K562 (cell line): ENCODE measurements at regions of chr10 and their contacts with region 1.

Region 1: DNA sequence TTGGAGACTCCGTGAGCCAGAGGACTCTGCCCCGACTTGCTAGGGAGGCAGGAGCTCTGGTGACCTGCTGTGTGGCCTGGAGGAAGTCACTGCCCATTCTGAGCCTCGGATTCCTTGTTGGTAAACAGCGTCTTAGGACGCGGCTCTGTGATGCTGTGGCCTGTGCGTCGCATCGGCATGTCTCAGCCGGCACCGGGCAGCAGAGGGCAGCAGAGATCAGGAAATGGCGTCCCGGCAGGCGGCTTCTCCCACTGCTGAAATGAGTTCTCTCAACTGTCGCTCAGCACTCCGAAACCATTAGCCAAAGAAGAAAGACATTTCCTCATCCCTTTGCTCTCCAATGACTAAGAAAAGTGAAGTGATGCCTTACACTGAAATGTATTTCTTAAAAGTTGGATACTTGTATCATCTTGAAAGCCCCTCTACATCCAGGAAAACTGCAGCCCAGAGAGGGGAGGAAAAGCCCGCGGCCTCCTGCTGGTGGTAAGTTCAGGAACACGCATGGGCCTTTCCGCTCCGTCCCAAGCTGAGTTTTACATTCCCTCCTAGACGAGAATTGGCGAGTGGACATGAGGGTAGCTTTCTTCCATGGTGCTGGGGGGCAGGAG is 91.7 kb downstream of the WDR11 start:
- DNase-seq: peak; percentile 58 to 69 (median 60)
- ATAC-seq: peak; percentile 98
- H3K4me3 ChIP-seq: no peak overlapping the region
- H3K27ac ChIP-seq: no peak overlapping the region
- H3K4me1 ChIP-seq: no peaks in the 10 kb centered on the region; a peak in 1 of 5 replicates
- H3K27me3 ChIP-seq: peaks cover 0 to 22% of the 10 kb centered on the region in 2 experiments; a peak in 2 of 5 replicates
- CTCF ChIP-seq: peak; percentile 75 to 80 (median 75)
- EP300 ChIP-seq: no peak
- POLR2A ChIP-seq: no peak
- RAD21 ChIP-seq: peak; percentile 65 to 79

Region 2: GRCh38 chr10:121302541-121303180 is 359.8 kb after region 1 on chr10:
- CTCF ChIA-PET with region 1: no interaction called
- POLR2A ChIA-PET with region 1: no interaction called
- in situ Hi-C with region 1: no loop called
- intact Hi-C with region 1: no loop called
- DNase-seq: no peak
- ATAC-seq: no peak
- H3K4me3 ChIP-seq: no peak overlapping the region
- H3K27ac ChIP-seq: no peak overlapping the region
- H3K4me1 ChIP-seq: no peaks in the 10 kb centered on the region
- H3K27me3 ChIP-seq: no peaks in the 10 kb centered on the region
- CTCF ChIP-seq: no peak
- EP300 ChIP-seq: no peak
- POLR2A ChIP-seq: no peak
- RAD21 ChIP-seq: no peak

Region 3: DNA sequence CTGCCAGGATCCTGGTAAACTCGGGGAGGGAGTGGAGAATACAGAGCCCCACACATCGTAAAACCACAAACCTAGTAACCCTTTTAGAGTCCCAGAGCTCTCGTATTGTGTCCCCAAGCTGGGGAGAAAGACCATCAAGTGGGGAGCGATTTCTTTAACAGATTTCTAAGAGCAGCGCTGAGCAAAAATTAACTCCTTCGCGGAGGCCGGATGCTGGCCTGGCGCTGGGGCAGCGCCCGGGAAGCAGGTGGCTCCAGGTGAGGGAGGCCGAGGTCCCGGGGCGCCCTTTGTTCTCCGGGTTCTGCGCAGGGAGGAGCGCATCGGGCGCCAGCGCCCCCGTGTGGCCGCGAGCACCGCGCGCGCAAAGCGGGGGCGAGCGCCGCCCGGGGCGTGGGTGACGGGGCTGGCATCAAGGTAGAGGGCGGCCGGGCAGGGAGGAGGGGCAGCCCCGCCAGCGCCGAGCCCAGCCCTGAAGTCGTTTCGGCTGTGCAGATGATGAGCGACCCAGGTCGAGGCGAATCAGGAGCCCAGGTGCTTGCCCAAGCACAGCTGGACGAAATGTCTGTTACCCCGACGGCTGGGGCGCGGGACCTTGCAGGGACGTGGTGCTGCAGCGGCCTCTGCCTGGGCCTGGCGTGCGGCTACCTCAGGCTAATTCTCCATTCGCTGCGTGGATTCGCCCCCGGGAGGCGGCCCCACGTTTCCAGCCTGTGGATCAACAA is 665.7 kb after region 1 on chr10:
- CTCF ChIA-PET with region 1: interaction called, 3 read pairs
- POLR2A ChIA-PET with region 1: no interaction called
- in situ Hi-C with region 1: no loop called
- intact Hi-C with region 1: loop called (anchors 10 kb)
- DNase-seq: peak; percentile 26 to 66 (median 58)
- ATAC-seq: peak; percentile 93
- H3K4me3 ChIP-seq: no peak overlapping the region
- H3K27ac ChIP-seq: no peak overlapping the region
- H3K4me1 ChIP-seq: peaks cover 0 to 7% of the 10 kb centered on the region in 2 experiments; a peak in 2 of 5 replicates
- H3K27me3 ChIP-seq: peaks cover 2 to 19% of the 10 kb centered on the region in 2 experiments; a peak in 2 of 5 replicates
- CTCF ChIP-seq: peak; percentile 52 to 76 (median 63); a peak in 5 of 6 replicates
- EP300 ChIP-seq: no peak
- POLR2A ChIP-seq: no peak
- RAD21 ChIP-seq: peak; percentile 16 to 61; a peak in 3 of 4 replicates

Region 4: DNA sequence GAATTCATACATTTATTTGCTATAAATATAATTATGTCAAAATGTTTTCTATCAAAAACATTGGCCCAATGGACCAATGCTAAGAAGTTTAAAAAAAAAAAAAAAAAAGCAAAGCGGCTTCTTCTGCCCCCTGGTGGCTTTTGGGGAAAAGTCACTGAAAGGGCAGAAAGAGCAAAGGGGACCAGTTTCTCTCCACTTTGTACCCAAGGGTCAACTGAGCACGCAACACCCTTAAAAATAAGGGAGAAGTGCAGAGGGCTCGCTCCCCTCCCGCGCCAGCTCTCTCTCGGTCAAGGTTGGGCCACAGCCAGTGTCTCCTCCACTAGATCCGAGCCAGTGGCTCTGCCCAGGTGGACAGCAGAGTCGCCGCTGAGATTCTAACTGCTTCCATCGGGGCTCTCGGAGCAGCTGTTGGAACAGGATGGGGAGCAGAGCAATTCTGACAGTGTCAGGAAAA is 791.7 kb after region 1 on chr10:
- CTCF ChIA-PET with region 1: interaction called, 4 read pairs
- POLR2A ChIA-PET with region 1: no interaction called
- in situ Hi-C with region 1: loop called (anchors 10 kb)
- intact Hi-C with region 1: loop called (anchors 10 kb)
- DNase-seq: peak; percentile 27 to 32 (median 30)
- ATAC-seq: peak; percentile 45; the same call in 2 of the 3 replicates
- H3K4me3 ChIP-seq: no peak overlapping the region
- H3K27ac ChIP-seq: no peak overlapping the region
- H3K4me1 ChIP-seq: peaks cover 3% of the 10 kb centered on the region in 2 experiments; a peak in 3 of 5 replicates
- H3K27me3 ChIP-seq: peaks cover 2 to 29% of the 10 kb centered on the region in 2 experiments
- CTCF ChIP-seq: peak; percentile 49 to 63 (median 58)
- EP300 ChIP-seq: no peak
- POLR2A ChIP-seq: no peak
- RAD21 ChIP-seq: no peak

Region 5: DNA sequence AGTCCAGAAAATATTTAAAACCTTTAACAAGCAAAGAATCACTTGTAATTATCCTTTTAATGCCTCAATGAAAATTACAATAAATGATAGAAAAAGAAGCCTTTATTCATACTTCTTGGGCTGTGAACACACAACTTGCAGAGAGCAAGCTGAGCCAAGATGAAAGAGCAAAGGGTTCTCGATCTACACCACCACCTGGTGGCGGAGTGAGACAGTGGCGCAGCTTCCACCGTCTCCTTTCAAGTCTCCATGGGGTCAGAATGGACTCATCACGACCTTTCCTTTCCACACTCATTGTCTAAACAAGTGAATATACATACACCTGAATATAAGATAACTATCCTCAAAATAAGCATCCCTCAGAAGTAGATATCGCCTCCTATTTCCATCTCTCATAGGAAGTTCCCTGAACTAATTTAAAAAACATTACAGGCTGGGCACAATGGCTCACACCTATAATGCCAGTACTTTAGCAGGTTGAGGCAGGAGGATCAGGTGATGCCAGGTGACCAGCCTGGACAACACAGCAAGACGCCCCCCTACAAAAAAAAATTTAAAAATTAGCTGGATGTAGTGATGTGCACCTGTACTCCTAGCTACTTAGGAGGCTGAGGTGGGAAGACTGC is 944.2 kb after region 1 on chr10:
- CTCF ChIA-PET with region 1: interaction called, 4 read pairs
- POLR2A ChIA-PET with region 1: no interaction called
- in situ Hi-C with region 1: no loop called
- intact Hi-C with region 1: loop called (anchors 2 kb)
- DNase-seq: peak; percentile 39 to 65 (median 48)
- ATAC-seq: peak; percentile 96
- H3K4me3 ChIP-seq: no peak overlapping the region
- H3K27ac ChIP-seq: no peak overlapping the region
- H3K4me1 ChIP-seq: no peaks in the 10 kb centered on the region
- H3K27me3 ChIP-seq: no peaks in the 10 kb centered on the region
- CTCF ChIP-seq: peak; percentile 69 to 81 (median 70)
- EP300 ChIP-seq: no peak
- POLR2A ChIP-seq: no peak
- RAD21 ChIP-seq: peak; percentile 60 to 76

Region 6: GRCh38 chr10:121900443-121901174 is 957.7 kb after region 1 on chr10:
- CTCF ChIA-PET with region 1: interaction called, 3 read pairs
- POLR2A ChIA-PET with region 1: no interaction called
- in situ Hi-C with region 1: loop called (anchors 25 kb)
- intact Hi-C with region 1: no loop called
- DNase-seq: peak; percentile 37 to 58 (median 40)
- ATAC-seq: peak; percentile 91
- H3K4me3 ChIP-seq: no peak overlapping the region
- H3K27ac ChIP-seq: no peak overlapping the region
- H3K4me1 ChIP-seq: no peaks in the 10 kb centered on the region
- H3K27me3 ChIP-seq: no peaks in the 10 kb centered on the region
- CTCF ChIP-seq: peak; percentile 31 to 60 (median 57); a peak in 5 of 6 replicates
- EP300 ChIP-seq: no peak
- POLR2A ChIP-seq: no peak
- RAD21 ChIP-seq: peak in 1 of 2 experiments; percentile 65; a peak in 3 of 4 replicates